CD4-positive, alpha-beta T cell (primary cell): ENCODE measurements at regions of chr20 and their contacts with region 1.

Region 1: GRCh38 chr20:5569021-5569420 is 181.2 kb upstream of the SHLD1 start:
- DNase-seq: peak in 12 of 14 experiments; percentile 20 to 75 (median 40)
- ATAC-seq: peak; percentile 75
- H3K4me3 ChIP-seq: no peak overlapping the region
- H3K4me3 Mint-ChIP-seq: no peak overlapping the region
- H3K27ac ChIP-seq: no peak overlapping the region
- H3K27ac Mint-ChIP-seq: peak overlapping the region; percentile 87
- H3K4me1 ChIP-seq: peaks cover 11% of the 10 kb centered on the region
- H3K4me1 Mint-ChIP-seq: peaks cover 46% of the 10 kb centered on the region
- H3K27me3 ChIP-seq: no peaks in the 10 kb centered on the region
- H3K27me3 Mint-ChIP-seq: no peaks in the 10 kb centered on the region
- CTCF ChIP-seq: peak; percentile 68

Region 2: DNA sequence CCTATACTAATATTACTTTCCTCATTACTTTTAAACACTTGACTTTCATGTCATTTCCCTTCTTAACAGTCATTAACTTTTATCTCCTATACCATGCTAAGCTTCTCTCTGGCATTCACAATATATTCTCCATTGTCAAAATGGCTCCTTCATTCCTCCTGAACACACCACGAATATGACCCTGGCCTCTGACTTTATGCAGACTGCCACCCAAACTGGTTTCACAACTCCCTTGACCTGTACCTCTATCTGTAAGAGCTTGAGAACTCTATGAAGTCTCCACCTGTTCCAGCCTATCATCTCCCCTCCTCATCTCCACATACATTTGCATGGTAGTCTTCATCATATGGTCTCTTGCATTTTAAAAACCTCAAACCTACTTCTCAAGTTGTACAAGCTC is 25.6 kb before region 1 on chr20:
- CTCF ChIA-PET with region 1: no interaction called
- POLR2A ChIA-PET with region 1: no interaction called
- intact Hi-C with region 1: no loop called
- DNase-seq: no peak
- ATAC-seq: no peak
- H3K4me3 ChIP-seq: no peak overlapping the region
- H3K4me3 Mint-ChIP-seq: no peak overlapping the region
- H3K27ac ChIP-seq: no peak overlapping the region
- H3K27ac Mint-ChIP-seq: peak overlapping the region; percentile 3
- H3K4me1 ChIP-seq: no peaks in the 10 kb centered on the region
- H3K4me1 Mint-ChIP-seq: peaks cover 11% of the 10 kb centered on the region
- H3K27me3 ChIP-seq: no peaks in the 10 kb centered on the region
- H3K27me3 Mint-ChIP-seq: no peaks in the 10 kb centered on the region
- CTCF ChIP-seq: no peak

Region 3: GRCh38 chr20:5557123-5557522 is 11.9 kb before region 1 on chr20:
- CTCF ChIA-PET with region 1: interaction called, 13 read pairs
- POLR2A ChIA-PET with region 1: no interaction called
- intact Hi-C with region 1: no loop called
- DNase-seq: peak; percentile 16 to 69 (median 44)
- ATAC-seq: peak; percentile 77
- H3K4me3 ChIP-seq: no peak overlapping the region
- H3K4me3 Mint-ChIP-seq: no peak overlapping the region
- H3K27ac ChIP-seq: no peak overlapping the region
- H3K27ac Mint-ChIP-seq: peak overlapping the region; percentile 28
- H3K4me1 ChIP-seq: no peaks in the 10 kb centered on the region
- H3K4me1 Mint-ChIP-seq: peaks cover 21% of the 10 kb centered on the region
- H3K27me3 ChIP-seq: no peaks in the 10 kb centered on the region
- H3K27me3 Mint-ChIP-seq: no peaks in the 10 kb centered on the region
- CTCF ChIP-seq: peak; percentile 33

Region 4: DNA sequence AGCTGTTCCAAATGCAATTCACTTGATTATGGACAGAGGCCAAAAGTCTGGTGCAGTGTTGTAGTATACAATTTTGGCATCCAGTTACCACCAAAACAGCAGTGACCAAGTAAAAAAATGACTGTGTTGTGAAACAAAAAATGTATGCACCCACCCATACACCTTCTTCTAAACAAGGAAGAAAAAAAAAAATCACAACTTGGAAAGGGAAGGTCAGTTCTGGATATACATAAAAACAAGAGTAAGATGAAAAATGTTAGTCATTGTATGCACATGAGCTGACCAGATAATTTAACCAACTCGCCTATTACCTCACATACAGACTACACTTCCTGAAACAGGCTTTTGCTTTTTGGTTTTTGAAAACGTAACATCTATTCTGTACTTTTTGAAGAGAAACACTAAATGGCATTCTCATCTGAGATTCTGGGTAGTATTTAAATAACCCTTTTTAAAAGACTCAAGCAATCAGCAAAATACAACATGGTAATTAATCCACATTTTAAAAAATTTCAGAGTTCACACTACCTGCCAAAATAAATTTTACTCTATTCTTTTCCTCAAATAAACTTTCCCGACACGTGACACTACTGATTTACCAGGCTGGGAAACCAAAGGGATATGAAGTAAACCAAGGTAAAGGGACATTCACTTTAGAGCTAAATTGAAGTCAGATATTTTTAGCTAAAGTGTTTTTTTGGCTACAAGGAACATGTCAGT is 39.6 kb after region 1 on chr20:
- CTCF ChIA-PET with region 1: interaction called, 4 read pairs
- POLR2A ChIA-PET with region 1: interaction called, 4 read pairs
- intact Hi-C with region 1: loop called (anchors 2 kb)
- DNase-seq: peak in 3 of 14 experiments; percentile 39 to 47 (median 44)
- ATAC-seq: no peak
- H3K4me3 ChIP-seq: peak overlapping the region; percentile 99
- H3K4me3 Mint-ChIP-seq: peak overlapping the region; percentile 95
- H3K27ac ChIP-seq: peak overlapping the region; percentile 88 to 95
- H3K27ac Mint-ChIP-seq: peak overlapping the region; percentile 100
- H3K4me1 ChIP-seq: peaks cover 34% of the 10 kb centered on the region
- H3K4me1 Mint-ChIP-seq: peaks cover 61% of the 10 kb centered on the region
- H3K27me3 ChIP-seq: no peaks in the 10 kb centered on the region
- H3K27me3 Mint-ChIP-seq: no peaks in the 10 kb centered on the region
- CTCF ChIP-seq: no peak

Region 5: GRCh38 chr20:5950271-5951031 is 381.4 kb after region 1 on chr20 and contains the starts of genes MCM8 and TRMT6:
- CTCF ChIA-PET with region 1: no interaction called
- POLR2A ChIA-PET with region 1: no interaction called
- intact Hi-C with region 1: loop called in 1 of 2 experiments (anchors 10 kb)
- DNase-seq: peak; percentile 89 to 98 (median 94)
- ATAC-seq: peak; percentile 97
- H3K4me3 ChIP-seq: peak within 1 kb of the TSS; percentile 86
- H3K4me3 Mint-ChIP-seq: peak within 1 kb of the TSS; percentile 94
- H3K27ac ChIP-seq: peak within 1 kb of the TSS; percentile 55 to 61
- H3K27ac Mint-ChIP-seq: peak within 1 kb of the TSS; percentile 81
- H3K4me1 ChIP-seq: peaks cover 25% of the 10 kb centered on the region
- H3K4me1 Mint-ChIP-seq: peaks cover 38% of the 10 kb centered on the region
- H3K27me3 ChIP-seq: no peaks in the 10 kb centered on the region
- H3K27me3 Mint-ChIP-seq: no peaks in the 10 kb centered on the region
- CTCF ChIP-seq: no peak
- total RNA-seq, gene MCM8: 1.4 to 1.7 TPM
- total RNA-seq, gene TRMT6: 8.1 TPM

Region 6: GRCh38 chr20:6000871-6001270 is 431.9 kb after region 1 on chr20:
- CTCF ChIA-PET with region 1: no interaction called
- POLR2A ChIA-PET with region 1: no interaction called
- intact Hi-C with region 1: loop called (anchors 5 kb)
- DNase-seq: no peak
- ATAC-seq: no peak
- H3K4me3 ChIP-seq: no peak overlapping the region
- H3K4me3 Mint-ChIP-seq: no peak overlapping the region
- H3K27ac ChIP-seq: no peak overlapping the region
- H3K27ac Mint-ChIP-seq: no peak overlapping the region
- H3K4me1 ChIP-seq: peaks cover 16% of the 10 kb centered on the region
- H3K4me1 Mint-ChIP-seq: peaks cover 46% of the 10 kb centered on the region
- H3K27me3 ChIP-seq: no peaks in the 10 kb centered on the region
- H3K27me3 Mint-ChIP-seq: no peaks in the 10 kb centered on the region
- CTCF ChIP-seq: no peak